ENCODE measurements at regions of chr18 and their contacts with region 1.

Region 1: DNA sequence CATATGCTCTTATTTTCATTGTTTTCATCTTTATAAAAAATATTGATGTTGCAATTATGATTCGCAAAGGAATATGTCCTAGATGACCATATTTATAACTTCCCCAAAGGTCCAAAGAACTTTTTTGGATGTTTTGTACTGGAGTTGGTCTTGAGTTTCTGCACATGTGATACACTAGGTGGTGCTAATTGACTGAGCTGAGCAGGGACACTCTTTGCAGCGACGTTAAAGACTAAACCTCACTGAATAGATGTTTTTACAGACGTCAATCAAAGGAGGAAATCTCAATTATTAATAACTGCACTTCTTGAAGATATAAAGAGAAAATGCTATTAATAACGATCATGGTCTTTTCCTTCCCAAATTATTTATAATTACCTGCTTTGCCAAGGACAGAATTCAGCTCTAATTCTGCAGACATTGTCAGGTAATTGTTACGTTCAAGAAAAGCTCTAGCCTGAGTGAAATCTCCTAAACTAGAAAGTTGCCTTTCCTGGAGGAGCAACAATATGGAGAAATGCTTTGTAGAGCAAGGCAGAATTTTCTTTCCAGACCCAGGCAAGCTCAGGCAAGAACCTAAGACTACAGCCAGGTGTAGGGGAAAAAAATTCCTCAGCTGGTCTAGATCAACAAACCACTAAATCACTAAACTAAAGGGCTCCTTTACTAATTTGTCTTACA is 119.3 kb upstream of the RBBP8 start:
- DNase-seq: no peak
- H3K4me3 ChIP-seq: no peak overlapping the region
- CTCF ChIP-seq: peak; percentile 55

Region 2: GRCh38 chr18:22528291-22528690 is 285.5 kb before region 1 on chr18:
- CTCF ChIA-PET with region 1: no interaction called
- POLR2A ChIA-PET with region 1: no interaction called
- DNase-seq: no peak
- H3K4me3 ChIP-seq: no peak overlapping the region
- CTCF ChIP-seq: no peak

Region 3: GRCh38 chr18:22800551-22800951 is 13.2 kb before region 1 on chr18:
- CTCF ChIA-PET with region 1: interaction called, 37 read pairs
- POLR2A ChIA-PET with region 1: no interaction called
- DNase-seq: no peak
- H3K4me3 ChIP-seq: no peak overlapping the region
- CTCF ChIP-seq: no peak

Region 4: DNA sequence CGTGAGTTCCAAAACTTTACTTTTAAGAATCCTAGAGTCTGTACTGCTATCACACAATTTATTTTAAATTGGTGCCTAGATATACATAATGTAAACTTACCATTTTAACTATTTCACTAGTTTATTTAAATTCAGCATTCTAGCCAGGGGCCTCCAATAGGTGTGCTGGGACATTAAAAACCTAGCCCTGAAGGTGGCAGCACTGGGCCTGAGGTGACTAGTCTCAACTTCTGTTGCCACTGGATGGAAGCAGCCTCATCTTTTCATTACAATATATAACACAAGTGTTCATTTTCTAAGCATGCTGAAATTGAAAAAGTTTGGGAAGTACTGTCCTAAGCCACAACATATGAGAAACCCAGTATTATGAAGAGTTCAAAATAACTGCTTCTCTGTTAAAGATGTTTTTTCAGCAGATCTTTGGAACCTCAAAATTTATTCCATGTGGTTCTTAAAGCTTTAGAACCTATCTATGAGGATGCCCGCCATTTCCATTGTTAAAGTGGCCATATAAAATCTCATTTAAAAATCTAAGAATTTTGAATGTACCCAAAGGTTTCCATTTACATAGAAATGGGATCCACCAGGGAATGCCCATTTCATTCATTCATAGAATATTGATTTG is 116.4 kb after region 1 on chr18:
- CTCF ChIA-PET with region 1: interaction called, 21 read pairs
- POLR2A ChIA-PET with region 1: no interaction called
- DNase-seq: no peak
- H3K4me3 ChIP-seq: no peak overlapping the region
- CTCF ChIP-seq: peak; percentile 74

Region 5: DNA sequence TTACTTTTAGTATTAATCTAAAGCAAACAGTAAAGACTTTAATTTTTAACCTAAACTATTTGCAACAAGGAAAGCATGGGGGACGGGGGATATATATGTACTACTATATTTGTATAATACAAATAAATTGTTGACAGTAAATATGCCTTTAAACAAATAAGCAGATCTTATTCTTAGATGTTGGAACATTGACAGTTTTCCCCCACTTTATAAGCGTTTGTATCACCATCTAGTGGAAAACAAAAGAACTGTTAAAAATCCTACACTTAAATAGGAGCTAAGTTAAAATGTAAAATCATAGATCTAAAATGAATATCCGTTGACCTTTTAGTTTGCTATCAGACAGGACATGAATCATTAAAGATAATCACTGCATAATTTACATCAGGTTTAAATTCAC is 169.4 kb after region 1 on chr18:
- CTCF ChIA-PET with region 1: interaction called, 114 read pairs
- POLR2A ChIA-PET with region 1: no interaction called
- DNase-seq: no peak
- H3K4me3 ChIP-seq: no peak overlapping the region
- CTCF ChIP-seq: peak; percentile 25

Region 6: GRCh38 chr18:23416298-23416697 is 602.5 kb after region 1 on chr18:
- CTCF ChIA-PET with region 1: interaction called, 11 read pairs
- POLR2A ChIA-PET with region 1: no interaction called
- DNase-seq: no peak
- H3K4me3 ChIP-seq: no peak overlapping the region
- CTCF ChIP-seq: no peak

Measured in AG04449 (cell line).